Left lung (tissue), 14 donors: ENCODE measurements at regions of chr2 and their contacts with region 1.

Region 1: GRCh38 chr2:74919827-74920226 is 38.6 kb upstream of the POLE4 start:
- DNase-seq: peak; percentile 31 to 94 (median 73)
- ATAC-seq: peak; percentile 80
- H3K4me3 ChIP-seq: no peak overlapping the region
- H3K27ac ChIP-seq: no peak overlapping the region
- H3K4me1 ChIP-seq: peaks cover 0 to 26% of the 10 kb centered on the region in 2 donors
- H3K27me3 ChIP-seq: peaks cover 0 to 18% of the 10 kb centered on the region in 2 donors
- CTCF ChIP-seq: peak; percentile 83 to 86

Region 2: GRCh38 chr2:75403991-75404428 is 484.2 kb after region 1 on chr2:
- intact Hi-C with region 1: loop called in 1 of 2 experiments (anchors 10 kb)
- DNase-seq: peak in 2 of 4 donors; percentile 20 to 53
- ATAC-seq: peak; percentile 91
- H3K4me3 ChIP-seq: no peak overlapping the region
- H3K27ac ChIP-seq: no peak overlapping the region
- H3K4me1 ChIP-seq: no peaks in the 10 kb centered on the region
- H3K27me3 ChIP-seq: peaks cover 0 to 21% of the 10 kb centered on the region in 2 donors
- CTCF ChIP-seq: peak; percentile 59 to 68